Head of caudate nucleus (tissue), 42 donors: ENCODE measurements at regions of chr12 and their contacts with region 1.

Region 1: DNA sequence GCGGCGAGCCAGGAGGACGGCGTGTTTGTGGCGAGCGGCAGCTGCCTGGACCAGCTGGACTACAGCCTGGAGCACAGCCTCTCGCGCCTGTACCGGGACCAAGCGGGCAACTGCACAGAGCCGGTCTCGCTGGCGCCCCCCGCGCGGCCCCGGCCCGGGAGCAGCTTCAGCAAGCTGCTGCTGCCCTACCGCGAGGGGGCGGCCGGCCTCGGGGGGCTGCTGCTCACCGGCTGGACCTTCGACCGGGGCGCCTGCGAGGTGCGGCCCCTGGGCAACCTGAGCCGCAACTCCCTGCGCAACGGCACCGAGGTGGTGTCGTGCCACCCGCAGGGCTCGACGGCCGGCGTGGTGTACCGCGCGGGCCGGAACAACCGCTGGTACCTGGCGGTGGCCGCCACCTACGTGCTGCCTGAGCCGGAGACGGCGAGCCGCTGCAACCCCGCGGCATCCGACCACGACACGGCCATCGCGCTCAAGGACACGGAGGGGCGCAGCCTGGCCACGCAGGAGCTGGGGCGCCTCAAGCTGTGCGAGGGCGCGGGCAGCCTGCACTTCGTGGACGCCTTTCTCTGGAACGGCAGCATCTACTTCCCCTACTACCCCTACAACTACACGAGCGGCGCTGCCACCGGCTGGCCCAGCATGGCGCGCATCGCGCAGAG is 873 bp downstream of the PLXNC1 start:
- DNase-seq: peak in 33 of 42 donors; percentile 15 to 68 (median 44)

Region 2: GRCh38 chr12:93839064-93839463 is 310.2 kb before region 1 on chr12:
- intact Hi-C with region 1: no loop called
- DNase-seq: no peak

Region 3: DNA sequence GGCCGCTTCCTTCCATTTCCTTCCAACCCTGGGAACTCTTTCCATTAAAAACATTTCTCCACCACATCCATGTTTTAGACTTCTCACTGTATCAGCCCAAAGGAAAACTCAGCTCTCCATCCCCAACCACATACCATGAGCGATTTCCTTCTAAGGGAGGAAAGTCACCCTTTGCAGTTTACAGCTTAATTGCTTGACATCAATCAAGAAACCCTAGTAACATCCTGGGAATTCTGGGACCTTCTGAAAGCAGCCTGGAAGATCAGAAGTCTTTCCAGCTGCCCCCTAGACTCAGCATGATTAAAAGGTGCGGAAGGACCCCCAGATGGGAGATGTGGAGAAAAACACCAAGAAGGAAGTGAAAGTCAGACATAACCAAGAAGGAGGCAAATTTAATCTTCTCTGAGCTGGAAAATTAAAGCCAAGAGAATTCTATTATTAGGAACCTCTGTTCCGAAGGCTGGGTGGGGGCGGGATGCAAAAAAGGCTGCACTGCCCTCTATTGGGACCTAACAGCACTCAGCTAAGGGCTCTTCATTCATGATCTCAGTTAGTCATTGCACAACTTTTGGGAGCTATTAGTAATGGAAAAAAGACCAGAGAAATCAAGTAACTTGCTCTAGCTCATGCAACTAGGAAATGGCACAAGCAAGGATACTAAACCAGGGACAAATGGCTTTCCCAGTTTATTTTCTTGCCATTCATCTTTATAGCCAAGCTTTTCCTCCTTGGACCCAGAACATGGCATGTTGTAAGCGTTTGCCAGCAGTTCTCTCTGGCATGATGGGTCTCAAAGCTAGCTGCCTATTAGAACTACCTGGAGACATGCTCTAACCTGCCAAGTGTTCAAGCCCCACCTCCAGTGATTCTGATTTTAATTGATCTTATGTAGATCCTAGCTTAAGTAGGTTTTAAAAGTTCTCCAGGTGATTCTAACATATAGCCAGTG is 74.0 kb before region 1 on chr12:
- intact Hi-C with region 1: no loop called
- DNase-seq: peak in 29 of 42 donors; percentile 4 to 68 (median 30)

Region 4: GRCh38 chr12:94101738-94102660 is 47.3 kb before region 1 on chr12:
- intact Hi-C with region 1: no loop called
- DNase-seq: peak; percentile 71 to 93 (median 85)

Region 5: DNA sequence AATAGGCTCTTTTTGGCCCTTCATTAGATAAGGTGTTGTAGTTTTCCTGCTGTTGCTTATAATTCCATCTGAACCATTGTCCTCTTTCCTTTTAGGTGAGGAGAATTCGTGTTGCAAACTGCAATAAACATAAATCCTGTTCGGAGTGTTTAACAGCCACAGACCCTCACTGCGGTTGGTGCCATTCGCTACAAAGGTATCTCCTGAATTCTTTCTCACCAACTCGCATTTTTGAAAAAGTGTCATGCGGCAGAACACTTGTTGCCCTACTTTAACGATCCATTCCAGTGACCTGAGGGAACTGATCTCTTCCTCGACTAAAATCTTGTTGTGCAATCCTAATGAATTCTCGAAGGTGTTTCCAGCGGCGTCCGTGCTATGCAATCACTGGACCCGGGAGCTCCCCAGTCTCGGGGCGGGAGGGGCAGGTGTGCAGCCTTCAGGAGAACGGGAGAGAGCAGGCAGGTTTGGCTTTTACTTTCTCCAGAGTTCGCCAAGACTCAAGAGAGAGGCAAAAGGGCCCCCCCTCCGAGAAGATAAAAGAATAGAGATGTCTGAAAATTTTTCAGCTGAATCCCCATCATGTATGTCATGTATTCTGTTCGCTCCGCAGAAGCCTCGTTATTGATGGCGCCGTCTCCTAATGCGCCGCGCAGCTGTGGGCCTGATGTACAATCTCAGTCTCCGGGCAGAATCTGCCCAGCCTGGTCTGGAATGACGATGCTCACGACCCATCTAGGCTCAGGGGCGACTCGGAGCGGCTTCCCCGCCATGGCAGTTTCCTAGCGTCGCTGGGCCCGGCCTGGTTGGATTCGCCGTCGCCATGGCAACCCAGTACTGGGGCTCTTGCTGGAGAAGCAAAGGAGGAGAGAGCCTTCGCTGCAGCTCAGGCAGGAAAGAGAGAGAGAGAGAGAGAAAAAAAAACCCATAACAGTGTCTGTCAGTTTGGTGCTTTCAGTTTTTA is 37.3 kb after region 1 on chr12:
- intact Hi-C with region 1: loop called (anchors 2 kb)
- DNase-seq: peak; percentile 71 to 95 (median 90)

Region 6: DNA sequence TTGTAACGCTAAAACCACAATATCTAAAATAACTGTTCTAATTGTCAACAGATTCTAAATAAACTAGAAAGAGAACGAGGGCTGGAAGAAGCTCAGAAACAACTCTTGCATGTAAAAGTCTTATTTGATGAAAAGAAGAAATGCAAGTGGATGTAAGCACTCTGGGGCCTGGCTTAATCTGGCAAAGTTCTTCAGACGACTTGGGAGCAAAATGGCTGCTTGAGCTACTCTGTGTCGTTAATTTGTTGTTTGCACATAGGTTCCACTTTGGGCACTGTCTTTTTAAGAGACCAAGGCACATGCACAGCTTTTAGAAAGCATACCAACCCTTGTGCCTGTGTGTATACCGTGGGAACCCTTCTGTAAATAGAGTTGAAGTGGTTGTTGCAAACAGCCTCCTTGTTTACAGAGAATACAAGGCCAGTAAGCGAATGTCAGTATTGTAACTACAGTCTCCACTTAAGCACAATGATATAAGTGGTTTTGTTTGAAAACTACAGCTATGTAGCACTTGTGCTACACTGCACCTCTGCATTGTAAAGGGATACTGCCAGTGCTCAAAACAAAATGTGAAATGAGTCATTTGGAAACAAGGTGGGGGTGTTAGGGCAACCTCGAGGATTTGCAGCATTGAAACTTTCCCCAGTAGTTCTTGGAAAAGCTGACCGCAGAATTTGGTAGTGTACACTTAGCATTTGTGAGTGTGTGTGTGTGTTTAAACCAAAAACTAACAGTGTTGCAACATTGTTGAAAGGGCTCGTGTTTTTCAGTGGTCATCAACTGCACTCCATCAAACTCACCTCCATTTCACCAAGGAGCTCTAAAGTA is 156.1 kb after region 1 on chr12:
- intact Hi-C with region 1: no loop called
- DNase-seq: no peak

Region 7: GRCh38 chr12:94435511-94435927 is 286.3 kb after region 1 on chr12:
- intact Hi-C with region 1: loop called (anchors 10 kb)
- DNase-seq: peak in 12 of 42 donors; percentile 4 to 30 (median 16)

Region 8: DNA sequence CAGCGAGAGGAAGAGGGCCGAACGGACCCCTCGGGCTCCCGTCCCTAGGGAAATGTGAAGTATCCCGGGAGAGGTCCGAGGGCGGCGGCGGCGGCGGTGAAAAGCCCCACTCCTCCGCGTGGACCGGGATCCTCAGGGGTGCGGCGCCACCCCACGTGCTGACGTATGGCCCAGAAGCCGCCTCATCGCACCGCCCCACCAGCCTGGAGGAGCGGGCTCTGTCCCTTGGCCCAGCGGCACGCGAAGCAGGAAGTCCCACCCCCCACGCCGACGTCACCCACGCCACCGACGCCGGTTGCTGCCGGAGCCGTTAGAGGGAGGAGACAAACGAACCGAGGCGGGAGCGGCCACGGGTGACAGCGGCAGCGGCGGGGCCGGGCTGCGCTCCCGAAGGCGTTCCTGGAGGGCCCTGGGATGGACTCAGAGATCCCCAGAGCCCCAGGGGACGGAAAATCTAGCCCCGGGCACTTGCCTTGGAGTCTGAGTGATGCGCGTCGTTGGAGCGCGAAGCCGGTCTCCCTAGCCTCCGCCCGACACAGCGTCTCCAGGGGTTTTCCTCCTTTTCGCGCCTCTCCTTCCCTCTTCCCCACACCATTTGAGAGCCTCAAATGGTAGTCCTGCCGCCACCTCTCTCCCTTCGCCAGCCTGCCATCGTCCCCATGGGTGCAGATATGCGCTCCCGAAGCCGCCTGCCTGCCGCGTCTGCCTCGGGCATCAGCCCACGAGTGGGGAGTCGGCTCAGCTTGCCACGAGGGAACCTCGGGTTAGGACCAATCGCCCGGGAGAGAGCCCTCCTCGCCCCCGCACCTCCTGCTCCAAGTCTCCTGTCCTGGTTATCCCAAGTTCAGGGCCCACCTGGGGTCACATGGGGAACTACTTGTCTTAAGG is 310.7 kb after region 1 on chr12 and contains the start of gene CEP83:
- intact Hi-C with region 1: loop called (anchors 10 kb)
- DNase-seq: peak; percentile 93 to 99 (median 98)

Region 9: GRCh38 chr12:94532490-94533422 is 383.5 kb after region 1 on chr12:
- intact Hi-C with region 1: loop called (anchors 5 kb)
- DNase-seq: peak; percentile 52 to 90 (median 76)